SK-N-SH (cell line): ENCODE measurements at regions of chr10 and their contacts with region 1.

Region 1: DNA sequence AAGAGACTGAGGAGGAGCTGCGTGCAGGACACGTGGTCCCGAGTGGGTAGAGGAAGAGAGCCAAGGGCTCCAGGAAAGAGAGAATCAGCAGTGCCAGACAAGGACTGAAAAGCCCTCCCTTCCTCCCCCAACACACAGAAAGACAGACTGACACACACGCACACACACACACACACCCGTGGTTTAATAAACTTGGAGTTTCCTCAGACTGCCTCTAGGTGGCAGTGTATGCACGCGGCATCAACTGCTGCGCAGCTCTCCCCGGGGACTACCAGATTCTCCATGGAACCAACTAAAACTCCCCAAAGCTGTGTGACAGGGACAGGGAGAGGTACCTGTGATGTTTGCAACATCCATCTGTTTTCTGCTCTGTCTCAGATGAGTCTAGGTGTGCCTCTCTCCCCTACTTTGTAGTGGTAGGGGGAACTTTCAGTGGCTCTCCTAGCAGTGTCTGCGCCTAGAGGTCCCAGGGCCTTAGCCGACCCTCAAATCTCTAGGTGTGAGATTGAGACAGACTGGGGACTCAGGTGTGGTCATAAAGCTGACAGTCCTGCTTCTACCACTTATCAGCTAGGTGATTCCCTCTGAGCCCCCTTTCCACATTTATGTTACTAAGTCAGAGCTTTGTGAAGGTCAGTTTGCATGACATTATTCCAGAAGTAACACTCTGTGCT is 9.3 kb upstream of the TSPAN14 start:
- DNase-seq: peak; percentile 58
- H3K4me3 ChIP-seq: no peak overlapping the region
- H3K27ac ChIP-seq: no peak overlapping the region
- H3K4me1 ChIP-seq: peaks cover 11 to 22% of the 10 kb centered on the region in 2 experiments; a peak in 3 of 4 replicates
- H3K27me3 ChIP-seq: no peaks in the 10 kb centered on the region
- CTCF ChIP-seq: peak; percentile 64
- EP300 ChIP-seq: no peak
- RAD21 ChIP-seq: peak; percentile 85

Region 2: DNA sequence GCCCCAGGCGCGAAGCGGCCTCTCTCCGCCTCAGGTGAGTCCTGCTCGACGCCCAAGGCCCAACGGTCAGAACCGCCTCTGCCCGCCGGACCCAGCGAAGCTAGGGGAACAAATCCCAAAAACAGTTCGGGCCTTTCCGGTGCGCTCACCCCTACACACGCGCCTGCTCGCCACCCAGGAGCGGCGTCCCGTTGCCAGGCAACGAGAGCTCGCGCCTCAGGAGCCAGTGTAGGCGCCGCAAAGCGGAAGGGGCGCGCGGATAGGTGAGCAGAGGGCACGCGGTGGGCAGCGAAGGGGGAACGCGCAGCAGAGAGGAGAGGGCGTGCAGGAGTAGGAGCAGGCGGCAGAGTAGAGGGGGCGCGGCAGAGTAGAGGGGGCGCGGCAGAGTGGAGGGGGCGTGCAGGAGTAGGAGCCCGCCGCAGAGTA is 88.2 kb before region 1 on chr10 and contains the starts of genes DYDC1 and DYDC2:
- CTCF ChIA-PET with region 1: no interaction called
- POLR2A ChIA-PET with region 1: no interaction called
- DNase-seq: peak; percentile 83
- H3K4me3 ChIP-seq: peak within 1 kb of the TSS in 1 of 2 experiments; percentile 46; a peak in 2 of 4 replicates
- H3K27ac ChIP-seq: no peak within 1 kb of the TSS
- H3K4me1 ChIP-seq: peaks cover 0 to 5% of the 10 kb centered on the region in 2 experiments; a peak in 1 of 4 replicates
- H3K27me3 ChIP-seq: no peaks in the 10 kb centered on the region
- CTCF ChIP-seq: no peak
- EP300 ChIP-seq: no peak
- RAD21 ChIP-seq: no peak
- polyA plus RNA-seq, gene DYDC1: not detected in 2 replicates
- polyA plus RNA-seq, gene DYDC2: 0.08 and 0.10 TPM in 2 replicates

Region 3: DNA sequence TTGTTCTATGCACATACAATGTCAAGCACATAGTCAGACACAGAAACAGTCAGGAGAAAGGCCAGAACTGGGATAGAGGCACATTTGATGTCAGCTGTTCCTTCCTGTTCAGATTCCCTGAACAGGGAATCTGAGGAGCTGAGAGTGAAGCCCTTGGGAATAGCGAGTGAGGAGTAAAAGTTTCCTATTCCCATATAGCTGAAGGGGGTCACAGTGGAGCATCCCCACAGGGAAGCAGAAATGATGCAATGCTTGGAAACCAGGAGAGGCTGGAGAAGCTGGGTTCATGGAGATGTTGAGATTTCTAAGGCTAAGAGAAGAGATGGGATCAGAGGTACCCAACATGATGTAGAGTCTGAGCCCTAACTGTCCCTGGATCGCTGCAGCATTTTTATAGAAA is 47.8 kb before region 1 on chr10:
- CTCF ChIA-PET with region 1: interaction called, 23 read pairs
- POLR2A ChIA-PET with region 1: no interaction called
- DNase-seq: no peak
- H3K4me3 ChIP-seq: no peak overlapping the region
- H3K27ac ChIP-seq: no peak overlapping the region
- H3K4me1 ChIP-seq: peaks cover 0 to 8% of the 10 kb centered on the region in 2 experiments; a peak in 1 of 4 replicates
- H3K27me3 ChIP-seq: no peaks in the 10 kb centered on the region; the same call in 1 of the 2 replicates
- CTCF ChIP-seq: no peak
- EP300 ChIP-seq: no peak
- RAD21 ChIP-seq: no peak

Region 4: DNA sequence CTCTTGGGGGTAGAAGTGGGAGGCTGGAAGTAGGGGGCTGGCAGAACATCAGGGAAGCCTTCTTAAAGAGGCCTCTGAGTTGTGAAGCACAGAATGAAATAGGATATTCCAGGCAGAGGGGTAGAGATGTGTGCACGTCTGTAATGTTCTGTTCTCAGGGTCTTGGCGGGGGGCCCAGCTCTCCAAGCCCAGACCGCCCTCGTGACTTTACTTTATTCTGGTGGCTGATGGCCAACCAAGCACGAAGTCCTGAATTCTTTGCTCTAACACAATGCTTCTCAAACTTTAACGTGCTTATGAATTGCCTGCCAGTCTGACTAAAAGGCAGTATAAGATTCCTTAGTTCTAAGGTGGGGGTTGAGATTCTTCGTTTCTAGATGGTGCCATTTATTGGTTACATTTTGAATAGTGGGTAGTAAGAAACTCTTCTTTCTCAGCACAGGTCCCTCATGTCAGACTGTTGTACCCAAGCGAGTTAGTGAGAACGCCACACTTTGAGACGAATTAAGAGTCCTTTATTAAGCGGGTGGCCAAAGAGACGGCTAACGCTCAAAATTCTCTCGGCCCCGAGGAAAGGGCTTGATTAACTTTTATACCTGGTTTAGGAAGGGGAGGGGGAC is 28.2 kb before region 1 on chr10:
- CTCF ChIA-PET with region 1: interaction called, 20 read pairs
- POLR2A ChIA-PET with region 1: no interaction called
- DNase-seq: no peak
- H3K4me3 ChIP-seq: no peak overlapping the region
- H3K27ac ChIP-seq: 0 out of 4 replicates have a peak overlapping the region, but pooled peaks of 1 of the 2 experiments have one; percentile 25
- H3K4me1 ChIP-seq: peaks cover 18 to 63% of the 10 kb centered on the region in 2 experiments; a peak in 2 of 4 replicates
- H3K27me3 ChIP-seq: no peaks in the 10 kb centered on the region
- CTCF ChIP-seq: no peak
- EP300 ChIP-seq: no peak
- RAD21 ChIP-seq: no peak

Region 5: GRCh38 chr10:80459047-80459931 is 14.5 kb after region 1 on chr10:
- CTCF ChIA-PET with region 1: interaction called, 38 read pairs
- POLR2A ChIA-PET with region 1: no interaction called
- DNase-seq: peak; percentile 78
- H3K4me3 ChIP-seq: no peak overlapping the region; a peak in 1 of 4 replicates
- H3K27ac ChIP-seq: peak overlapping the region; percentile 62 to 92
- H3K4me1 ChIP-seq: peaks cover 75 to 76% of the 10 kb centered on the region in 2 experiments
- H3K27me3 ChIP-seq: no peaks in the 10 kb centered on the region
- CTCF ChIP-seq: no peak
- EP300 ChIP-seq: no peak; a peak in 1 of 4 replicates
- RAD21 ChIP-seq: peak; percentile 13; the same call in 1 of the 2 replicates

Region 6: GRCh38 chr10:80498833-80499741 is 54.3 kb after region 1 on chr10:
- CTCF ChIA-PET with region 1: interaction called, 602 read pairs
- POLR2A ChIA-PET with region 1: no interaction called
- DNase-seq: no peak
- H3K4me3 ChIP-seq: no peak overlapping the region
- H3K27ac ChIP-seq: peak overlapping the region in 1 of 2 experiments; percentile 77; a peak in 3 of 4 replicates
- H3K4me1 ChIP-seq: peaks cover 23 to 45% of the 10 kb centered on the region in 2 experiments; a peak in 3 of 4 replicates
- H3K27me3 ChIP-seq: no peaks in the 10 kb centered on the region
- CTCF ChIP-seq: no peak
- EP300 ChIP-seq: peak in 1 of 2 experiments; percentile 29; a peak in 1 of 4 replicates
- RAD21 ChIP-seq: no peak

Region 7: GRCh38 chr10:80686734-80687475 is 242.1 kb after region 1 on chr10:
- CTCF ChIA-PET with region 1: no interaction called
- POLR2A ChIA-PET with region 1: no interaction called
- DNase-seq: no peak
- H3K4me3 ChIP-seq: no peak overlapping the region
- H3K27ac ChIP-seq: no peak overlapping the region
- H3K4me1 ChIP-seq: no peaks in the 10 kb centered on the region; a peak in 1 of 4 replicates
- H3K27me3 ChIP-seq: no peaks in the 10 kb centered on the region
- CTCF ChIP-seq: no peak
- EP300 ChIP-seq: no peak
- RAD21 ChIP-seq: no peak

Region 8: DNA sequence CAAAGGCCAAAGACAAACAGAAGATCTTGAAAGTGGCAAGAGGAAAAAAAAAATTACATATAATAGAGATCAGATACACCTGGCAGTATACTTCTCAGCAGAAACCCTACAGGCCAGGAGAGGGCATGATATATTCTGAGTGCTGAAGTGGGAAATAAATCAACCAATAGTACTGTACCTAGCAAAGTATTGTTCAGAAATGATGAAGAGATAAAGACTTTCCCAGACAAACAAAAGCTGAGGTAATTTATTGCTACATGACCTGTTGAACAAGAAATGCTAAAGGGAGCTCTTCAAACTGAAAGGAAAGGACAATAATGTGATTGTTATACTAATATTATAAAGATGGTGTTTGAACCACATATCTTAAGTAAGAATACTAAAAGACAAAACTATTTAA is 384.8 kb after region 1 on chr10:
- CTCF ChIA-PET with region 1: no interaction called
- POLR2A ChIA-PET with region 1: no interaction called
- DNase-seq: no peak
- H3K4me3 ChIP-seq: no peak overlapping the region
- H3K27ac ChIP-seq: no peak overlapping the region
- H3K4me1 ChIP-seq: no peaks in the 10 kb centered on the region
- H3K27me3 ChIP-seq: no peaks in the 10 kb centered on the region
- CTCF ChIP-seq: no peak
- EP300 ChIP-seq: no peak
- RAD21 ChIP-seq: no peak